Heart right ventricle (tissue), 16 donors: ENCODE measurements at regions of chr9 and their contacts with region 1.

Region 1: DNA sequence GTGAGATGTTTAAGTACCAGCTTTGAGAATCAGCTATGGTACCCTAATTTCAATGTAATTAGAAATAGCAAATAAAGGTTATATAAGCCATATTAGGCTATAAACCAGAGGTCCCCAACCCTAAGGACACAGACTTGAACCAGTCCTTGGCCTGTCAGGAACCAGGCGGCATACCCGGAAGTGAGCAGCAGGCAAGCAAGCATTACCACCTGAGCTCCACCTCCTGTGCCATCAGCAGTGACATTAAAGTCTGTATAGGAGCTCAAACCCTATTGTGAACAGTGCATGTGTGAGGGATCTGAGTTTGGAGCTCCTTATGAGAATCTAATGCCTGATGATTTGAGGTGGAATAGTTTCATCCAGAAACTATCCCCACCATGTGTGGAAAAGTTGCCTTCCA is 1009.5 kb downstream of the PTPRD start:
- DNase-seq: no peak
- ATAC-seq: no peak
- H3K4me3 ChIP-seq: no peak overlapping the region
- H3K27ac ChIP-seq: no peak overlapping the region
- H3K4me1 ChIP-seq: no peaks in the 10 kb centered on the region
- H3K27me3 ChIP-seq: no peaks in the 10 kb centered on the region
- CTCF ChIP-seq: no peak

Region 2: GRCh38 chr9:9778293-9778692 is 174.9 kb after region 1 on chr9:
- intact Hi-C with region 1: loop called in 1 of 10 experiments (anchors 10 kb)
- DNase-seq: no peak
- ATAC-seq: no peak
- H3K4me3 ChIP-seq: no peak overlapping the region
- H3K27ac ChIP-seq: no peak overlapping the region
- H3K4me1 ChIP-seq: no peaks in the 10 kb centered on the region
- H3K27me3 ChIP-seq: no peaks in the 10 kb centered on the region
- CTCF ChIP-seq: no peak

Region 3: DNA sequence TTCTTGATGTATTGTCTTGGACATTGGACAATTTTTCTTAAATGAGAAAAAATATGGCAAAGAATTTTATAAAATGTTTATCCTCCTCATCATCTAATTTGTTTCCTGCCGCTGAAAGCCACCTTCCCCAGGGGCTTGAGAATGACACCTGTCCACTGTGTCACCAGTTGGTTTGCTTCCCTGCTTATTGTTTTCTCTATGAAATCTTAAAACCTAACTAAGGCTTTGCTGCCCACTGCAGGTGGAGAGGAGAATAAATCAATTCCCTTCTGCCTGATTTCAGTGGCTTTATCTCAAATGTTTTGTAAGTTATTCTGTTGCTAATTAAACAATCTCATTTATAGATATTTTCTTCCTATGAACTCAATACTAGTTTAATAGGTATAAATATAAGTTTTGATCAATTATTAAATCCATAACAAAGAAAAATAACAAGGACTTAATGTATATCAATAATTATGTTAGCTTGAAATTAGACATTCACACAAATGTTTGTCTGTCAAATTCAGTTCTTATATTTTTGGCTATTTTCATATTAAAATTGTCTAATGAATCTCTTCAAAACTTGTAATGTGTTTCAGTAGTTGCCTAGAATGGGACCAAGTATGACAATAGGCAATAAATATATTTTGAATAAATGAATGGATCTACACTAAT is 187.0 kb after region 1 on chr9:
- intact Hi-C with region 1: loop called in 3 of 10 experiments (anchors 5 to 10 kb)
- DNase-seq: no peak
- ATAC-seq: no peak
- H3K4me3 ChIP-seq: no peak overlapping the region
- H3K27ac ChIP-seq: no peak overlapping the region
- H3K4me1 ChIP-seq: no peaks in the 10 kb centered on the region
- H3K27me3 ChIP-seq: no peaks in the 10 kb centered on the region
- CTCF ChIP-seq: peak in 7 of 9 donors; percentile 42 to 64 (median 47)

Region 4: GRCh38 chr9:9942764-9943424 is 339.5 kb after region 1 on chr9:
- intact Hi-C with region 1: loop called in 1 of 10 experiments (anchors 5 kb)
- DNase-seq: peak; percentile 32 to 36
- ATAC-seq: peak in 2 of 8 donors; percentile 56 to 69
- H3K4me3 ChIP-seq: no peak overlapping the region
- H3K27ac ChIP-seq: no peak overlapping the region
- H3K4me1 ChIP-seq: no peaks in the 10 kb centered on the region
- H3K27me3 ChIP-seq: no peaks in the 10 kb centered on the region
- CTCF ChIP-seq: peak; percentile 60 to 92 (median 88)